ENCODE measurements at regions of chr2 and their contacts with region 1.

Region 1: GRCh38 chr2:187299122-187299906 is 148.7 kb downstream of the CALCRL start:
- DNase-seq: no peak
- ATAC-seq: no peak; the same call in 1 of the 2 replicates
- H3K4me3 ChIP-seq: no peak overlapping the region
- H3K27ac ChIP-seq: no peak overlapping the region
- H3K4me1 ChIP-seq: no peaks in the 10 kb centered on the region
- H3K27me3 ChIP-seq: no peaks in the 10 kb centered on the region
- CTCF ChIP-seq: peak; percentile 27; the same call in 1 of the 2 replicates
- POLR2A ChIP-seq: no peak
- RAD21 ChIP-seq: peak; percentile 26; the same call in 1 of the 2 replicates

Region 2: GRCh38 chr2:187271825-187272224 is 27.5 kb before region 1 on chr2:
- CTCF ChIA-PET with region 1: no interaction called
- POLR2A ChIA-PET with region 1: no interaction called
- dilution Hi-C with region 1: no loop called
- in situ Hi-C with region 1: no loop called
- intact Hi-C with region 1: no loop called
- DNase-seq: no peak
- ATAC-seq: no peak
- H3K4me3 ChIP-seq: no peak overlapping the region
- H3K27ac ChIP-seq: no peak overlapping the region
- H3K4me1 ChIP-seq: no peaks in the 10 kb centered on the region
- H3K27me3 ChIP-seq: no peaks in the 10 kb centered on the region
- CTCF ChIP-seq: no peak
- POLR2A ChIP-seq: no peak
- RAD21 ChIP-seq: no peak

Region 3: DNA sequence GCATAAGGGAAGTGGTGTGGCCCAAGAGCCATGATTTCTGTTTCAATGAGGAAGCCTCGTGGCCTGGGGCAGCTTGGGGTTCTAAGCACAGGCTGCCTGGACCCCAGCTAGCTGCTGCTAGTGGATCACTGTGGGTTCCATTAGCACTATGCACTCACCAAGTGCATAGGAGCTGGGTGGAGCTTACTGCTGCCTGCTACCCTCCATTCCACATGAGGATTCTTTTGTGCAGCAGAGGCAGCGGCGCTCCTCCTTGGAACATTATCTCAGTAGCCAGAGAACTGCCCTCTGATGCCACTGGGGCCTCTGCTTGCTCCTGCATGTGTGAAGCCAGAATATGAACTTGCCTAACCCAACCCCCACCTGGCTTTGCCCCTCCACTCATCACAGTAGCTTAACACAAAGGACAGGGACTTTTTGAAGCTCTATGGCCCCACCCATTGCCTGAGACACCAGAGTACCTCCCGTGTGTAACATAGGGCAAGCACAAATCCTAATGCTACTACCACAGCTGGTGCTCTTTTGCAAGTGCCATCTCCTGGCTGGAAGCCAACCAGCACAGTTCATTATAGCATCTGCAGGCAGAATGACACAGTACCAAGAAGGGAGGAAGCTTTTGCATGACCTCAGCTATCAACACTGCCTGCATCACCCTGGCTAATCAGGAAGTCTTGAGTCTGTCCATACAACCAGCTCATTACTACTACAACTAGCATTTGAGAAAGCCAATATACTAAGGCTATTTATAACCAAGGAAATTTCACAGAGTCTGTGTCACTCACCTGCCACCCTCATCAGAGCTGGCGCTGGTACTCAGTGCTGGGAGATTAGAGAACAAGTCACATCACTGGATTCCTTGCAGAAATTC is 695.4 kb after region 1 on chr2:
- CTCF ChIA-PET with region 1: no interaction called
- POLR2A ChIA-PET with region 1: no interaction called
- dilution Hi-C with region 1: no loop called
- in situ Hi-C with region 1: no loop called
- intact Hi-C with region 1: loop called (anchors 5 kb)
- DNase-seq: peak; percentile 36
- ATAC-seq: no peak
- H3K4me3 ChIP-seq: no peak overlapping the region
- H3K27ac ChIP-seq: no peak overlapping the region
- H3K4me1 ChIP-seq: peaks cover 4% of the 10 kb centered on the region; the same call in 1 of the 2 replicates
- H3K27me3 ChIP-seq: no peaks in the 10 kb centered on the region
- CTCF ChIP-seq: no peak
- POLR2A ChIP-seq: no peak
- RAD21 ChIP-seq: no peak